HEK293 (cell line): ENCODE measurements at regions of chr14 and their contacts with region 1.

Region 1: GRCh38 chr14:67526676-67527459 is 6.2 kb upstream of the PLEKHH1 start:
- H3K4me3 ChIP-seq: no peak overlapping the region
- H3K27ac ChIP-seq: no peak overlapping the region
- H3K4me1 ChIP-seq: peaks cover 6% of the 10 kb centered on the region
- CTCF ChIP-seq: peak; percentile 70

Region 2: DNA sequence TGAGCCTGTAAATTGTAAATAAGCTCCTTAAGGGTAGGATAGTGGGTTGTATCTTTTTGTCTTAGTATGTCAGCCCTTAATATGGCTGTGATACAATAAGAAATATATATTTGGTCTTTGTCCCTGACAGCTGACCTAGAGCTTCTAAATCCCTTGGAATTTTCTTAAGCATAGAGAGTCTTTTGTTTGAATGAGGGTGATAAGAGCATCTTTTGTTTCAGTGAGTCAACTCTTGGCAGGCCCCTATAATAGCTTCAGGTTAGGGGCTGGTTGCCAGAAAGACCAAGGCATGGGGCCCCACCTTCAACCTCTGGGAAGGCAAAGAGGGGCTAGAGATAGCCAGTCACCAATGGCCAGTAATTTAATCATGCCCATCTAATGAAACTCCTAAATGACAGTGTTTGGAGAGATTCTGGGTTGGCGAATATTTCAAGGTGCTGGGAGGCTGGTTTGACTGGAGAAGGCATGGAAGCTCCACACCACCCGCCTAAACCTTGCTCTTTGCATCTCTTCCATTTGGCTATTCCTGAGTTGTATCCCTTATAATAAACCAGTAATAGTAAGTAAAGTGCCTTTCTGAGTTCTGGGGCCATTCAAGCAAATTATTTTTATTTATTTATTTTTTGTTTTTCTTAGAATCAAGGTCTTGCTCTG is 275.2 kb before region 1 on chr14:
- CTCF ChIA-PET with region 1: no interaction called
- POLR2A ChIA-PET with region 1: no interaction called
- H3K4me3 ChIP-seq: no peak overlapping the region
- H3K27ac ChIP-seq: no peak overlapping the region; the same call in 1 of the 2 replicates
- H3K4me1 ChIP-seq: peaks cover 31% of the 10 kb centered on the region
- CTCF ChIP-seq: no peak

Region 3: GRCh38 chr14:67426983-67427606 is 99.8 kb before region 1 on chr14:
- CTCF ChIA-PET with region 1: interaction called, 20 read pairs
- POLR2A ChIA-PET with region 1: no interaction called
- H3K4me3 ChIP-seq: no peak overlapping the region
- H3K27ac ChIP-seq: no peak overlapping the region
- H3K4me1 ChIP-seq: no peaks in the 10 kb centered on the region
- CTCF ChIP-seq: peak; percentile 60

Region 4: DNA sequence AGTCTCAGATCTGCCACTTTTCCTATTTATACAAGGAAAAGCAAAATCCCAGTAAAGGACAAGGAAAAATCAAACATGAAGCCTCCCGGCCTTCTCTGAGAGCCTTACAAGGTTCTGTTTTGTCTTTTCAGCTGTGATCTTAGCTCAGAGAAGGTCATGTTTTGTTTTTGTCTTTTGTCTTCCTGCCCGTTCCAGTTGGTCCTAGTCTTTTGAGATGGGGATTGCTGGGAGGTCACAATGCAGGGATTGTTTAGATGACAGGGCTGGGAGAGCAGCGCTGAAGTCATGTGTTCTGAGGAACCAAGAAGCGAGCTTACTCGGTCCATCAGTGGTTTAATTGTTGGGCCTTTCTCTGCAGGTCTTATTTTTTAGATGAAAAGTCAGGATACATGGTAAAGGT is 12.2 kb after region 1 on chr14:
- CTCF ChIA-PET with region 1: interaction called, 33 read pairs
- POLR2A ChIA-PET with region 1: no interaction called
- H3K4me3 ChIP-seq: no peak overlapping the region
- H3K27ac ChIP-seq: no peak overlapping the region
- H3K4me1 ChIP-seq: no peaks in the 10 kb centered on the region
- CTCF ChIP-seq: no peak

Region 5: GRCh38 chr14:67557126-67557525 is 30.3 kb after region 1 on chr14:
- CTCF ChIA-PET with region 1: interaction called, 45 read pairs
- POLR2A ChIA-PET with region 1: no interaction called
- H3K4me3 ChIP-seq: no peak overlapping the region
- H3K27ac ChIP-seq: no peak overlapping the region
- H3K4me1 ChIP-seq: no peaks in the 10 kb centered on the region; the same call in 1 of the 2 replicates
- CTCF ChIP-seq: no peak

Region 6: GRCh38 chr14:67583711-67584644 is 57.1 kb after region 1 on chr14:
- CTCF ChIA-PET with region 1: interaction called, 57 read pairs
- POLR2A ChIA-PET with region 1: interaction called, 3 read pairs
- H3K4me3 ChIP-seq: no peak overlapping the region
- H3K27ac ChIP-seq: no peak overlapping the region
- H3K4me1 ChIP-seq: no peaks in the 10 kb centered on the region
- CTCF ChIP-seq: peak; percentile 77

Region 7: GRCh38 chr14:67695394-67695949 is 168.6 kb after region 1 on chr14 and contains the start of gene RDH11:
- CTCF ChIA-PET with region 1: interaction called, 22 read pairs
- POLR2A ChIA-PET with region 1: interaction called, 3 read pairs
- H3K4me3 ChIP-seq: peak within 1 kb of the TSS; percentile 89
- H3K27ac ChIP-seq: peak within 1 kb of the TSS; percentile 64
- H3K4me1 ChIP-seq: peaks cover 5% of the 10 kb centered on the region; the same call in 1 of the 2 replicates
- CTCF ChIP-seq: no peak